ENCODE measurements at regions of chr12 and their contacts with region 1.

Region 1: GRCh38 chr12:9634177-9634803 is 26.6 kb upstream of the KLRB1 start:
- DNase-seq: no peak
- H3K4me3 ChIP-seq: no peak overlapping the region
- H3K27ac ChIP-seq: peak overlapping the region in 4 of 8 donors; percentile 28 to 73 (median 56)
- H3K4me1 ChIP-seq: peaks cover 11 to 61% (median 35%) of the 10 kb centered on the region in 6 donors
- H3K27me3 ChIP-seq: no peaks in the 10 kb centered on the region
- CTCF ChIP-seq: peak; percentile 60 to 85 (median 76)
- POLR2A ChIP-seq: no peak

Region 2: DNA sequence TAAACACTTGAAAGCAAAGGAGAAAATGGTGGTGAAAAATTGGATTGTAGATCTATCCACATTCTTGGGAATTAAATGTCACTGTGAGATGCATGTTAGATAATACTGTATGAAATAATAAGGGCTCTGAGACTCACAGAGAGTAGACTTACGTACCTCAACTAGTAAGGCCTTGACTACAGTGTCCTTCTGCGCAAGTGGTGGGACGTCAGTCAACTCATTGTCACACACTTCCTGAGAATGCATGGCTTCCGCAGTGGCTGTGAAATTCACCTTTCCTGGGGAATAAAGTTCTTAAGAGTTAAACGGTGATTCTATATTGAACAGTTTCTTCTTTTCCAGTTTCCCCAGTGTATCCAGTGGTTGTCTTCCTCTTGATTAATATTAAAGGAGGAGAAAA is 393.5 kb before region 1 on chr12:
- intact Hi-C with region 1: no loop called
- DNase-seq: no peak
- H3K4me3 ChIP-seq: peak overlapping the region; percentile 27 to 62 (median 36)
- H3K27ac ChIP-seq: peak overlapping the region; percentile 36 to 80 (median 70)
- H3K4me1 ChIP-seq: peaks cover 0 to 16% (median 4%) of the 10 kb centered on the region in 6 donors
- H3K27me3 ChIP-seq: peaks cover 0 to 3% (median 0%) of the 10 kb centered on the region in 7 donors
- CTCF ChIP-seq: no peak
- POLR2A ChIP-seq: no peak

Region 3: DNA sequence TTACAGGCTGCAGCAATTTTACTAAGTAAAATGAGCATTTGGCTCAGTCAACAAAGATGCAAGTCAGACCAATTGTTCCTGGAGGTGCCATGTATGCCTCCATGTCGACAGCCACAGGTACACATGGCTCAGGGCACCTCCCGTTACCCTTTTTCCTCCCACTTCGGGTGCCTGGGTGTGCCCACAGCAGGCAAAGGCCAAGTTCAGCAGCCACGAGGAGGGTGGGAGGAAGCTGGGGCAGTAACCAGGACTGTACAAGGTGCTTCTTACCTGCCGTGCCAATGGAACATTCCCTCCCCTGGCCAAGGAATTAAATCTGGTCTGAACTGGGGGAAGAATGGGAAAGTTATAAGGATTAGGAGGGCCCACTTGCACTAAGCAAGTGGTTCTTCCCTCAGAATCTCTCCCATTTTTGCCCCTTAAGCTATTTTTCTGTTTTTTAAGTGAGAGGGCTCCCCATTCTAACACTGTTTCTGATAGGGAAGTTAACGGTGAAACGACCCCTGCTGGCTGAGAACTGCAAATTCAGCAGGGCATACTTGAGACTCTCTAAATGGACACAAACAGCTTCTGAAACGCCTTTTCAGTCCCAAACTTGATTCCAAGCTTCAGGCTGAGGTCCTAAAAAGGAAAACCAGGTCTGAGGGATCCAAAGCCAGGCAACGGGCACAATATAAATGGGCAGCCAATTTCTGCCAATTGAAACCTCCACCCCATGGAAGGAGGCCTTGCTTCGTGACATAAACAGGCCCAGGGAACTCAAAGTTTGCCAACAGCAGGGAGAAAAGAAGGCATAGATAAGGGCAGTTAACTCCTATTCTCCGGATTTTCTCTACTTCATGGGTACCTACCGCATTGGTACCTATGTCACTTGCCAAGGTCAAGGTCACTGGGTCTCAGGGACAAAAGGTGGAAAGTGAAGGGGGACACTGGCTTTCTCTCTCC is 73.8 kb after region 1 on chr12:
- intact Hi-C with region 1: loop called (anchors 2 kb)
- DNase-seq: peak; percentile 80
- H3K4me3 ChIP-seq: peak overlapping the region in 1 of 8 donors; percentile 32
- H3K27ac ChIP-seq: peak overlapping the region; percentile 63 to 91 (median 78)
- H3K4me1 ChIP-seq: peaks cover 8 to 80% (median 37%) of the 10 kb centered on the region in 6 donors
- H3K27me3 ChIP-seq: no peaks in the 10 kb centered on the region
- CTCF ChIP-seq: peak; percentile 77 to 90 (median 87)
- POLR2A ChIP-seq: no peak